ENCODE measurements at regions of chr5 and their contacts with region 1.

Region 1: DNA sequence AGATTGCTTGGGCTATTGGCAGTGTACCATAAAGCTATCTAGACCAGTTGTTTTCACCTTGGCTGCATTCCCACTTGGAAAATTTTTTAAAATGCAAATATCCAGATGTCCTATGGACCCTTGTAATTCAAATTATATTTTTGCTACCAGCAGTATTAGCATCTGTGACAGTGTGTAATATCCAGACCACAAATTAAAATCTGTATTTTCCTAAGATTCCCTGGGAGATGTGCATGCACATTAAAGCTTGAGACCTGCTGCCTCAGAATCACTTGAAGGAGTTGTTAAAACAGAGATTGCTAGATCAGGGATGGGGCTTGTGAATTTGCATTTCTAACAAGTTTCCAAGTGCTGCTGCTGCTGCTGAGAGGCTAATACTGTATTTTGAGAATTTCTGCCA is 381.2 kb upstream of the PDE4D start:
- DNase-seq: no peak
- H3K4me3 ChIP-seq: no peak overlapping the region
- H3K27ac ChIP-seq: peak overlapping the region; percentile 12 to 68
- H3K4me1 ChIP-seq: peaks cover 6 to 25% of the 10 kb centered on the region in 2 donors
- H3K27me3 ChIP-seq: no peaks in the 10 kb centered on the region
- CTCF ChIP-seq: no peak

Region 2: GRCh38 chr5:60092671-60093422 is 181.9 kb before region 1 on chr5:
- intact Hi-C with region 1: loop called (anchors 10 kb)
- DNase-seq: peak in 1 of 2 donors; percentile 65
- H3K4me3 ChIP-seq: no peak overlapping the region
- H3K27ac ChIP-seq: peak overlapping the region in 1 of 2 donors; percentile 6
- H3K4me1 ChIP-seq: no peaks in the 10 kb centered on the region
- H3K27me3 ChIP-seq: no peaks in the 10 kb centered on the region
- CTCF ChIP-seq: no peak

Region 3: GRCh38 chr5:60257596-60258271 is 17.0 kb before region 1 on chr5:
- intact Hi-C with region 1: no loop called
- DNase-seq: no peak
- H3K4me3 ChIP-seq: no peak overlapping the region
- H3K27ac ChIP-seq: no peak overlapping the region
- H3K4me1 ChIP-seq: peaks cover 0 to 4% of the 10 kb centered on the region in 2 donors
- H3K27me3 ChIP-seq: no peaks in the 10 kb centered on the region
- CTCF ChIP-seq: no peak

Region 4: DNA sequence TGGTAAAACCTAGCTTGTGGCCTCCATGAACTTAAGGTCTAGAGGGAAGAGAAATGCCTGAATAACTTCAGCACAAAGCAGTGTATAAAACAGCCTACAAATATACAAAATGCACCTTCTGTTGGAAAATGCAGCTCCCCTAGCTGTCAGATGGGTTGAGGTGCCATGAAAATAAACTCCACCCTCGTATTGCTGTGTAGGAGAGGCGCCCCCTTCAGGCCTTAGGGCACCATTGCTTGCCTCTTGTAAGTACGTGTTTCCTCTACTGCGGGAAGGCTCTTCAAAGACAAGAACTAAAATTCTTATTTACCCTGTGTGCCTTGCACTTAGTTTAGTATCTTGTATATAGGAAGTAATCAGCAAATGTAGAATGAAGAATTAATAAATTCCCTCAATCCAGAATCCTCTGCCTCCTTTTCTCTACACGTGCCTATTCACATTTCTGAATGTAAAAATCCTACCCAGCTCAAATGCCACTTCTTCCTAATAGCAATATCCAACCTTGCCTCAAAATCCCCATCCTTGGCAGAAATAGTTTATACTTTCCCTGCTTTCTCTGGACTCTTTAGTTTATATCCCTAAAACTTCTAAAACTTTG is 12.5 kb after region 1 on chr5:
- intact Hi-C with region 1: no loop called
- DNase-seq: no peak
- H3K4me3 ChIP-seq: no peak overlapping the region
- H3K27ac ChIP-seq: no peak overlapping the region
- H3K4me1 ChIP-seq: no peaks in the 10 kb centered on the region
- H3K27me3 ChIP-seq: no peaks in the 10 kb centered on the region
- CTCF ChIP-seq: peak; percentile 7 to 24 (median 21)

Region 5: DNA sequence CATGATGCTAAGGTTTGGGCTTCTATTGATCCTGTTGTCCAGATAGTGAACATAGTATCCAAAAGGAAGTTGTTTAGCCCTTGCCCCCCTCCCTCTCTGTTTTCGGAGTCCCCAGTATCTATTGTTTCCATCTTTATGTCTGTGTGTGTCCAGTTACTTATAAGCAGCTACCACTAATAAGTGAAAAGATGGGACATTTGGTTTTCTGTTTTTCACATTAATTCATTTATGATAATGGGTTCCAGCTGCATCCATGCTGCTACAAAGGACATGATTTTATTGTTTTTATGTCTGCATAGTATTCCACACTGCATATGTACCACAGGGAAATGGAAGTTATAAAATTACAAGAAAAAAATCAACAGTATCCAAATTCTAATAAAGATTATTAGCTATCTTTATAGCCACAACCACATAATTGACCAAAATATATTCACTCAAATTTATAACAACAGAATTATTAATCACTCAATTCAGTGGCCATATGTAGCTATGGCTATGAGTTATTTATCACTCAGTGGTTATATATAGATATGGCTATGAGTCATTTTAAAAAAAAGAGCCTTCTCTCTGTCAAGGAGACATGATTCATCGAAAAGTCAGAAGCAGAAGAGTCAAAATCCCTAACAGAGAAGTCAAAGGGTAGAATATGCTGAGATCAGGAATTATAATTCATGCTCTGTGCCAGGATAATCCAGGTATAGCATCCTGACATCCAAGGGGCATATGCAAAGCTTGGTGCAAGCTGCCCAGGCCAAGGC is 57.7 kb after region 1 on chr5:
- intact Hi-C with region 1: loop called (anchors 5 kb)
- DNase-seq: no peak
- H3K4me3 ChIP-seq: no peak overlapping the region
- H3K27ac ChIP-seq: peak overlapping the region in 1 of 2 donors; percentile 32
- H3K4me1 ChIP-seq: peaks cover 7 to 36% of the 10 kb centered on the region in 2 donors
- H3K27me3 ChIP-seq: no peaks in the 10 kb centered on the region
- CTCF ChIP-seq: no peak

Region 6: DNA sequence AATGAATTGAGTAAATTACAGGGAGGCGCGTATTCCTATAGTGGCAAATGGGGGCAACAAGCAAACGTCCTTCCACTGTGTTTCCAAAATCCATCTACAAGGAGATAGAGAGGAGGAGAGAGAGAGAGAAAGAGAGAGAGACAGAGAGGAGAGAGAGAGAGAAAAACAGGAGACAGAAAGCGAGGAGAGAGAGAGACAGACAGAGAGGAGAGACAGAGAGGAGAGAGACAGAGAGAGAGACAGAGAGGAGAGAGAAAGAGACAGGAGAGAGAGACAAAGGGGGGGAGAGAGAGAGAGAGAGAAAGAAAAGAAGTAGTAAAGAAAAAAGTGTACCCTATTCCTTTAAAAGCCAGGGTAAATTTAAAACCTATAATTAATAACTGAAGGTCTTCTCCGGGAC is 385.3 kb after region 1 on chr5:
- intact Hi-C with region 1: no loop called
- DNase-seq: no peak
- H3K4me3 ChIP-seq: no peak overlapping the region
- H3K27ac ChIP-seq: no peak overlapping the region
- H3K4me1 ChIP-seq: no peaks in the 10 kb centered on the region
- H3K27me3 ChIP-seq: no peaks in the 10 kb centered on the region
- CTCF ChIP-seq: no peak

Measured in ascending aorta (tissue), 2 donors.